ENCODE measurements at regions of chr5 and their contacts with region 1.

Region 1: DNA sequence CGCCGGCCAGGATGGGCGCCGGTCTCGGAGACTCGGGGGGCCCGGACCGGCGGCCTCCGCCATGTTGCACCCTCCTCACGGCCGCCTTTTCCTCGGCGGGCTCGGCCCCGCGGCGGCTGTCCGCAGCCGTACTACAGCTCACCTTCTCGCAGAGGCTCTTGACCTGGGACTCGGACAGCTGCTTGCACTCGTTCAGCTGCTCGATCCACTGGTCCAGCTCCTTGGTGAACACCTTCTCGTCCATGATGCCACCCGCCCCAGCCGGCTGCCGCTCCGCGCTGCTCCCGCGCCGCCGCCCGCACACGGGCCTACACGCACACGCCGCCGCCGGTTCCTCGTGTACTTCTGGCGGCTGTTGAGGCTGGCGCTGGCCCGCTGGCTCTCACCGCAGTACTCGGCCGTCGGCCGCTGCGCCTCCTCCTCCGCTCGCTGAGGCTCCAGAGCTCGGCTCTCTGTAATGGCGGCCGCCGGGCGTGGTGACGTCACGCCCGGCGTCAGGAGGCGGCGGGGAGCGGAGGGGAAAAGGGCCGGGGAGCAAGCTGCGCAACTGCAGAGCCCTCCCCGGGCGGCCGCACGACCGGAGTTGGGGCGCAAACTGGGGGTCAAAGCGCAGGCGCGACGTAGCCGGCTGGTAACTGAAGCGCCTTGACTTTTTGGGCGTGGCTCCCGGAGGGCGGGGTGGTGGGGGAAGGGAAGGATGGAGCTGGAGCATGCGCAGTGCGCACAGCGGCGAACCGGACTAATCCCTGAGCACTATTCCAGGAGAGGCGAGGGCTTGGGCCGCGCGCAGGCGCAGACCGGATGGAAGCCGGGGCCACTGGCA is at the start of gene PPP2CA:
- DNase-seq: peak; percentile 93 to 98
- ATAC-seq: peak; percentile 88 to 94
- H3K4me3 ChIP-seq: peak within 1 kb of the TSS; percentile 78
- H3K27ac ChIP-seq: peak within 1 kb of the TSS; percentile 92 to 98
- H3K4me1 ChIP-seq: peaks cover 34% of the 10 kb centered on the region
- CTCF ChIP-seq: no peak
- EP300 ChIP-seq: no peak
- POLR2A ChIP-seq: peak; percentile 76
- RAD21 ChIP-seq: no peak; a peak in 2 of 5 replicates
- polyA plus RNA-seq, gene PPP2CA: 233 and 357 TPM in 2 replicates

Region 2: GRCh38 chr5:134125039-134126015 is 100.5 kb before region 1 on chr5:
- CTCF ChIA-PET with region 1: no interaction called
- POLR2A ChIA-PET with region 1: no interaction called
- DNase-seq: no peak
- ATAC-seq: peak; percentile 20 to 40; a peak in 4 of 6 replicates
- H3K4me3 ChIP-seq: no peak overlapping the region
- H3K27ac ChIP-seq: peak overlapping the region in 1 of 2 experiments; percentile 72; a peak in 4 of 6 replicates
- H3K4me1 ChIP-seq: peaks cover 18% of the 10 kb centered on the region
- CTCF ChIP-seq: no peak
- EP300 ChIP-seq: no peak
- POLR2A ChIP-seq: no peak
- RAD21 ChIP-seq: no peak

Region 3: DNA sequence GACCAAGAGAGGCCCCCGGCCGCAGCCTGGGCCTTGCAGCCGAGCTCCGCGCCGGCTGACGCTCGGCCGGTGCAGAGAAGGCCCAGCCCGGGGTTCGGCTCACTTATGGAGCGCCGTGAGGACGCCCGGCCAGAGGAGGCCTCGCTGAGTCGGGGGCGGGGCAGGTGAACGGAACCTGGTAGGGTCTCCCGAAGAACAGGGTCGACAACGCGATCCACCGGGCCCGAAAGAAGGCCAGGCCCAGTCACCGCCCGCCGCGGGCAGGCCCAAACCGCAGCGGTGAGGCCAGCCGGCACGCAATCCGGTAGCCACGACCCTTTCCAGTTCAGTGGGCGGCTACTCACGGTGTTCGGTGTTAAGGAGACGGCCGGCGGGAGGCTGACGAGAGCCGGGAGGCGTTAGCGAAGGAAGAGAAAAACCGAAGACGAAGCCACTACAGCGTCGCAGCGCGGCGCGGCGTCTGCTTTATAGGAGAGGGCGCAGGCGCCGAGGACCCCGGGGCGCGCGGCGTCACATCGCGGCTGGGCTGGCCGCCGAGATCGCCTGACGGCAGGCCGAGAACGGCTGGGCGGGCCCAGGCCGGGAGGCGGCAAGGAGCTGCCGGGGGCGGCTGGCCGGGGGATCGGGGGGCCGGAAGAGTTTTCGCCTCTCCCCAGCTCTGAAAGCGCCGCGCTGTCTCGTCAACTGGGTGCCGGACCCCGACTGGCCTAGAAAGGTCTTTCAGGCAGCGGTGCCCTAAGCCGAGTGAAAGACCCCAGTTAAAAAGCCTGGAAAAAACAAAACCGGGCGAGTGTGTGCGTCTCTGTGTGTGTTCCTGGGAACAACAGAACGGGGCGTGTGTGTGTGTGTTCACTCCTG is 49.1 kb before region 1 on chr5 and contains the start of gene SKP1:
- CTCF ChIA-PET with region 1: interaction called, 5 read pairs
- POLR2A ChIA-PET with region 1: interaction called, 46 read pairs
- DNase-seq: peak; percentile 58 to 88
- ATAC-seq: peak; percentile 84 to 89
- H3K4me3 ChIP-seq: peak within 1 kb of the TSS; percentile 89
- H3K27ac ChIP-seq: peak within 1 kb of the TSS; percentile 94 to 98
- H3K4me1 ChIP-seq: peaks cover 19% of the 10 kb centered on the region; the same call in 2 of the 3 replicates
- CTCF ChIP-seq: no peak
- EP300 ChIP-seq: no peak
- POLR2A ChIP-seq: peak; percentile 98
- RAD21 ChIP-seq: no peak
- polyA plus RNA-seq, gene SKP1: 608 and 776 TPM in 2 replicates

Region 4: DNA sequence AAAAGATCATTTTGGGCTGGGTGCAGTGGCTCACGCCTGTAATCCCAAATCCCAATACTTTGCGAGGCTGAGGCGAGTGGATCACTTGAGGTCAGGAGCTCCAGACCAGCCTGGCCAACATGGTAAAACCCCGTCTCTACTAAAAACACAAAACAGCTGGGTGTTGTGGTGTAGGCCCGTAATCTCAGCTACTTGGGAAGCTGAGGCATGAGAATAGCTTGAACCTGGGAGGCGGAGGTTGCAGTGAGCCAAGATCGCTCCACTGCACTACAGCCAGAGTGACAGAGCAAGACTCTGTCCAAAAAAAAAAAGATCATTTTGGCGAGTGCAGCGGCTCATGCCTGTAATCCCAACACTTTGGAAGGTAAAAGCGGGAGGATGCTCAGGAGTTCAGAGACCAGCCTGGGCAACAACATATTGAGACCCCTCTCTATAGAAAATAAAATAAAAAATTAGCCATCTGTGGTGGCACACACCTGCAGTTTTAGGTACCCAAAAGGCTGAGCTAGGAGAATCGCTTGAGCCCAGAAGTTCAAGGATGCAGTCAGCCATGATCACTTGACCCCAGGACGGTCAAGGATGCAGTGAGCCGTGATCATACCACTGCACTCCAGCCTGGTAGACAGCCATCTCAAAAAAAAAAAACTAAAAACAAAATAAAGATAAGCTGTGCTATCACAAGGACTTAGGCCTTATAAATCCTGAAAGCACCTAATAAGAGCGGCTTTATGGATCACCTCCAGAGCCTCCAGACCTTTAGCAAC is 16.2 kb before region 1 on chr5:
- CTCF ChIA-PET with region 1: interaction called, 5 read pairs
- POLR2A ChIA-PET with region 1: interaction called, 10 read pairs
- DNase-seq: no peak
- ATAC-seq: no peak
- H3K4me3 ChIP-seq: no peak overlapping the region
- H3K27ac ChIP-seq: no peak overlapping the region
- H3K4me1 ChIP-seq: no peaks in the 10 kb centered on the region
- CTCF ChIP-seq: no peak
- EP300 ChIP-seq: no peak
- POLR2A ChIP-seq: no peak
- RAD21 ChIP-seq: no peak

Region 5: DNA sequence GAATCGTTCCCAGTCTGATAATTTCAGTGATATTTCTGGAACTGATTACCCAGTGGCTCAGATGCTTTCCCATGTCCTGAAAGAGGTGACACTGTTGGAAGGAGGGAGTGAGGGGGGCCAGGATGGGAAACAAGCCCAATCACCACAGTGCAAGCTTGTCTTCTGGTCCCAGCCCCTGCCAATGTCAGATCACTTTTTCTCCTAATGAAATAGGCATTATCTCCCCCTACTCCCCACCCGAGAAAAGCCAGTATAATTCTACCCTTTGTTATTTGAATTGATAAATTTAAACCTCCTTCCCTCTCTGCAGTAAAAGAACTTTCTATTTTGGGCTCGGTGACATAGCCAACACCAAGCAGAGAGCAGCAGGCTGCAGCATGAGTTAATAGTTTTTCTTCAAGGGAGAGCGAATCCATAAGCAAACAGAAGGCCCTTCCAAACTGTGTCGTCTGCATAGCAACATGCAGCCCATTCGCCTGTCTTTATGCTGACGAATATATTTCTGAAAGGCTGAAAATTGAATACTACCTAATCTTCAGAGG is 14.7 kb after region 1 on chr5:
- CTCF ChIA-PET with region 1: interaction called, 11 read pairs
- POLR2A ChIA-PET with region 1: interaction called, 52 read pairs
- DNase-seq: peak in 1 of 2 experiments; percentile 58
- ATAC-seq: peak; percentile 60 to 72; a peak in 4 of 6 replicates
- H3K4me3 ChIP-seq: no peak overlapping the region
- H3K27ac ChIP-seq: peak overlapping the region; percentile 58 to 71
- H3K4me1 ChIP-seq: peaks cover 31% of the 10 kb centered on the region
- CTCF ChIP-seq: no peak
- EP300 ChIP-seq: no peak
- POLR2A ChIP-seq: no peak
- RAD21 ChIP-seq: no peak

Region 6: GRCh38 chr5:134275822-134276221 is 50.0 kb after region 1 on chr5:
- CTCF ChIA-PET with region 1: interaction called, 6 read pairs
- POLR2A ChIA-PET with region 1: interaction called, 30 read pairs
- DNase-seq: no peak
- ATAC-seq: no peak
- H3K4me3 ChIP-seq: no peak overlapping the region
- H3K27ac ChIP-seq: no peak overlapping the region
- H3K4me1 ChIP-seq: peaks cover 15% of the 10 kb centered on the region
- CTCF ChIP-seq: no peak
- EP300 ChIP-seq: no peak
- POLR2A ChIP-seq: no peak
- RAD21 ChIP-seq: no peak

Measured in A549 (cell line).